AG04450 (cell line): ENCODE measurements at regions of chr15 and their contacts with region 1.

Region 1: GRCh38 chr15:46442901-46443590 is 808.2 kb downstream of the SQOR start:
- DNase-seq: no peak
- H3K4me3 ChIP-seq: no peak overlapping the region
- H3K27ac ChIP-seq: no peak overlapping the region
- H3K27me3 ChIP-seq: no peaks in the 10 kb centered on the region
- CTCF ChIP-seq: no peak

Region 2: GRCh38 chr15:45425135-45425534 is 1017.9 kb before region 1 on chr15:
- CTCF ChIA-PET with region 1: no interaction called
- POLR2A ChIA-PET with region 1: interaction called, 11 read pairs
- DNase-seq: no peak
- H3K4me3 ChIP-seq: no peak overlapping the region
- H3K27ac ChIP-seq: no peak overlapping the region
- H3K27me3 ChIP-seq: no peaks in the 10 kb centered on the region
- CTCF ChIP-seq: no peak

Region 3: DNA sequence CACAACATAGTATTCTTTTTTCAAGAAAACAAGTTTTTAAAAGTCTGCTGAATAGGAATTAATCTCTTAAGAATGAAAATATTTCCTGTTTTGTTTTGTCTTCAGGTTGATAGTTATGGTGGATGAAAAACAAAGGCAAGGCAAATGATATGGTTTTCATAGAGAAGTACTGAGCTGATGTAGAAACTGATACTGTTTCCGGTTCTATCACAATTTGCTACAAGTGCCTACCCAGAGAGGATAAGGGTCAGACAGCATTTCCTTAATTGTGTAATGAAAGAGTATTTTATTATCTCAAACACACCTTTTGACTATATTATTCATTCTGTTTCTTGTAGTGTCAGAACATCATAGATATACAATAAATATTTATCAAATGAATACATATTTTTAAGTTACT is 28.1 kb after region 1 on chr15:
- CTCF ChIA-PET with region 1: no interaction called
- POLR2A ChIA-PET with region 1: no interaction called
- DNase-seq: no peak
- H3K4me3 ChIP-seq: no peak overlapping the region
- H3K27ac ChIP-seq: no peak overlapping the region
- H3K27me3 ChIP-seq: no peaks in the 10 kb centered on the region
- CTCF ChIP-seq: no peak